PC-9 (cell line): ENCODE measurements at regions of chr1 and their contacts with region 1.

Region 1: GRCh38 chr1:71273334-71273733 is 192.5 kb upstream of the ZRANB2 start:
- DNase-seq: no peak
- H3K4me3 ChIP-seq: no peak overlapping the region
- H3K27ac ChIP-seq: no peak overlapping the region
- H3K4me1 ChIP-seq: no peaks in the 10 kb centered on the region
- H3K27me3 ChIP-seq: no peaks in the 10 kb centered on the region
- CTCF ChIP-seq: no peak

Region 2: GRCh38 chr1:71919811-71920509 is 646.6 kb after region 1 on chr1:
- CTCF ChIA-PET with region 1: no interaction called
- POLR2A ChIA-PET with region 1: interaction called, 24 read pairs
- intact Hi-C with region 1: no loop called
- DNase-seq: no peak
- H3K4me3 ChIP-seq: no peak overlapping the region
- H3K27ac ChIP-seq: no peak overlapping the region
- H3K4me1 ChIP-seq: no peaks in the 10 kb centered on the region
- H3K27me3 ChIP-seq: no peaks in the 10 kb centered on the region
- CTCF ChIP-seq: no peak